ENCODE measurements at regions of chr11 and their contacts with region 1.

Region 1: DNA sequence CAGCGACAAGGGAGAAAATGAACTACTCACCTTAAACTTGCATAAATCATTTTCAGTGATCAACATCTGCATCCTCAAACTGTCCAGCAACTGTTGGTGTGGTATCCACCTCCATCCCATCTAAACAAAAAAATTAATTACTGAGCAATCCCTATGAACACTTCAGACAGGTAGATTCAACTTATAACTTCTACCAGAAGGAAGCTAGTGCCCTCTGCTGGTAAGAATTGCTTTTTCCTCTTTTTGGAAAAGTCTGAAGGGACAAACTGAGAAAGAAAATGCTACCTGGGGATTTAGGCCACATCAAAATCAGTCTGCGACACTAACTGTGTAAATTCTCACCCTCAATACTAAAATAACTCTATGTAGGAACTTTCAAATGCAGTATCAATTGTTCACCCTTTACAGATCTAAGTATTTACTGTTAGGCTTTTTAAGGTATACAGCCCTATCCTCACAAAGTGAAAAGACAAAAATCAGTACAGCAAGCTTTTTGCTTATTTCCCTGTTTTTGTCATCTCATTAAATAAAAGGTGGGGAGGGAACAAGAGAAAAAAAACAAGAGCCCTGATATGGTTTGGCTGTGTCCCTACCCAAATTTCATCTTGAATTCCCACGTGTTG is 17.9 kb downstream of the CLNS1A start:
- DNase-seq: no peak
- H3K4me3 ChIP-seq: no peak overlapping the region
- H3K27ac ChIP-seq: no peak overlapping the region
- H3K4me1 ChIP-seq: no peaks in the 10 kb centered on the region
- H3K27me3 ChIP-seq: no peaks in the 10 kb centered on the region
- CTCF ChIP-seq: peak in 2 of 3 experiments; percentile 37 to 68; a peak in 2 of 4 replicates
- EP300 ChIP-seq: no peak
- POLR2A ChIP-seq: no peak
- RAD21 ChIP-seq: peak; percentile 71 to 75

Region 2: GRCh38 chr11:77457340-77457739 is 162.3 kb before region 1 on chr11:
- CTCF ChIA-PET with region 1: no interaction called
- POLR2A ChIA-PET with region 1: no interaction called
- DNase-seq: no peak
- H3K4me3 ChIP-seq: peak overlapping the region in 2 of 4 experiments; percentile 1 to 24; a peak in 3 of 8 replicates
- H3K27ac ChIP-seq: no peak overlapping the region
- H3K4me1 ChIP-seq: peaks cover 2 to 25% (median 10%) of the 10 kb centered on the region in 4 experiments
- H3K27me3 ChIP-seq: no peaks in the 10 kb centered on the region
- CTCF ChIP-seq: no peak
- EP300 ChIP-seq: no peak
- POLR2A ChIP-seq: no peak
- RAD21 ChIP-seq: no peak

Region 3: GRCh38 chr11:77602381-77603088 is 17.2 kb before region 1 on chr11:
- CTCF ChIA-PET with region 1: interaction called, 17 read pairs
- POLR2A ChIA-PET with region 1: no interaction called
- DNase-seq: no peak
- H3K4me3 ChIP-seq: no peak overlapping the region
- H3K27ac ChIP-seq: no peak overlapping the region
- H3K4me1 ChIP-seq: no peaks in the 10 kb centered on the region; a peak in 1 of 7 replicates
- H3K27me3 ChIP-seq: no peaks in the 10 kb centered on the region
- CTCF ChIP-seq: no peak
- EP300 ChIP-seq: no peak
- POLR2A ChIP-seq: no peak
- RAD21 ChIP-seq: no peak

Region 4: GRCh38 chr11:77650123-77650522 is 30.4 kb after region 1 on chr11:
- CTCF ChIA-PET with region 1: no interaction called
- POLR2A ChIA-PET with region 1: no interaction called
- DNase-seq: no peak
- H3K4me3 ChIP-seq: no peak overlapping the region
- H3K27ac ChIP-seq: no peak overlapping the region
- H3K4me1 ChIP-seq: no peaks in the 10 kb centered on the region
- H3K27me3 ChIP-seq: no peaks in the 10 kb centered on the region
- CTCF ChIP-seq: no peak
- EP300 ChIP-seq: no peak
- POLR2A ChIP-seq: no peak
- RAD21 ChIP-seq: no peak